ENCODE measurements at regions of chr2 and their contacts with region 1.

Region 1: DNA sequence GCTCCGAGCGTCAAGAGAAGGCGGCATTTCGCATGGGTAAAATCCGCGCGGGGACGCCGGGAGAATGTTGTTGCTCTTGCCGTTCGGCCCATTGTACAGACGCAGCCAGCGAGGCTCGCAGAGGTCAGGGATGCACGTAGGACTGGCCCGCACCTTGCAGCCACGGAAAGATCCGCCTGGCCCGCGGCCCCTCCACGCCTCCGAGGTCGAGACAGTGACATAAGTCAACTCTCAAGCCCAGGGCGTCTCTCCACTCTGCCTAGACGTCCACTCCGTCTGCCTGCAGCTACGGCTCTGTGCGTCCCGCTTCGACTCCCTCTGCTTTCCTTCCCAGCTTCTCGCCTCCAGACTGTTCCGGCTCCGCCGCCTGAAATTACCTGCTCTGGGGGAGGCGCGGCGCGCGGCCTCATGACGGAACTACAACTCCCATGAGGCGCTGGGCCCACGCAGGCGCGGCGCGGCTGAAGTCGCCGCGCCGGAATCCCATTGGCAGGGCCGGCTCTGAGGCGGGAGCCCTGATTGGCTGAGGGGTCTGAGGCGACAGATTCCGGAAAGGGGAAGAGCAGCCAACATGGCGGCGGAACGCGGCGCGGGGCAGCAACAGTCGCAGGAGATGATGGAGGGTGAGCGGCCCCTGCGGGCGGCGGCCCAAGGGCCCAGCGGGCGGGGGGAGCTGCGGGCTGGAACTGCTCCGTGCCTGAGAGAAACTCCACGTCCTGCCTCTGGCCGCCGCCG is at the start of gene PPP1R7:
- DNase-seq: peak; percentile 88 to 98 (median 94)
- ATAC-seq: peak; percentile 80
- H3K4me3 ChIP-seq: peak within 1 kb of the TSS; percentile 93
- H3K4me3 Mint-ChIP-seq: peak within 1 kb of the TSS; percentile 97
- H3K27ac ChIP-seq: peak within 1 kb of the TSS; percentile 53 to 65
- H3K27ac Mint-ChIP-seq: peak within 1 kb of the TSS; percentile 89
- H3K4me1 ChIP-seq: peaks cover 36% of the 10 kb centered on the region
- H3K4me1 Mint-ChIP-seq: peaks cover 43% of the 10 kb centered on the region
- H3K27me3 ChIP-seq: no peaks in the 10 kb centered on the region
- H3K27me3 Mint-ChIP-seq: no peaks in the 10 kb centered on the region
- CTCF ChIP-seq: peak; percentile 61
- total RNA-seq, gene PPP1R7: 36.4 to 38.2 TPM

Region 2: GRCh38 chr2:240851078-240851991 is 298.8 kb before region 1 on chr2:
- CTCF ChIA-PET with region 1: no interaction called
- POLR2A ChIA-PET with region 1: no interaction called
- intact Hi-C with region 1: loop called in 1 of 2 experiments (anchors 5 kb)
- DNase-seq: peak; percentile 72 to 90 (median 82)
- ATAC-seq: peak; percentile 97
- H3K4me3 ChIP-seq: no peak overlapping the region
- H3K4me3 Mint-ChIP-seq: no peak overlapping the region
- H3K27ac ChIP-seq: no peak overlapping the region
- H3K27ac Mint-ChIP-seq: no peak overlapping the region
- H3K4me1 ChIP-seq: no peaks in the 10 kb centered on the region
- H3K4me1 Mint-ChIP-seq: no peaks in the 10 kb centered on the region
- H3K27me3 ChIP-seq: no peaks in the 10 kb centered on the region
- H3K27me3 Mint-ChIP-seq: peaks cover 3% of the 10 kb centered on the region
- CTCF ChIP-seq: peak; percentile 88

Region 3: GRCh38 chr2:241009601-241010530 is 140.2 kb before region 1 on chr2:
- CTCF ChIA-PET with region 1: no interaction called
- POLR2A ChIA-PET with region 1: interaction called, 7 read pairs
- intact Hi-C with region 1: loop called in 1 of 2 experiments (anchors 10 kb)
- DNase-seq: peak; percentile 24 to 73 (median 57)
- ATAC-seq: peak; percentile 87
- H3K4me3 ChIP-seq: peak overlapping the region; percentile 34
- H3K4me3 Mint-ChIP-seq: peak overlapping the region; percentile 79
- H3K27ac ChIP-seq: peak overlapping the region; percentile 49 to 59
- H3K27ac Mint-ChIP-seq: peak overlapping the region; percentile 90
- H3K4me1 ChIP-seq: peaks cover 44% of the 10 kb centered on the region
- H3K4me1 Mint-ChIP-seq: peaks cover 39% of the 10 kb centered on the region
- H3K27me3 ChIP-seq: peaks cover 0 to 3% of the 10 kb centered on the region in 2 experiments
- H3K27me3 Mint-ChIP-seq: no peaks in the 10 kb centered on the region
- CTCF ChIP-seq: no peak

Region 4: GRCh38 chr2:241102239-241102803 is 47.8 kb before region 1 on chr2 and contains the start of gene MTERF4:
- CTCF ChIA-PET with region 1: no interaction called
- POLR2A ChIA-PET with region 1: interaction called, 73 read pairs
- intact Hi-C with region 1: loop called (anchors 1 to 2 kb)
- DNase-seq: peak; percentile 79 to 95 (median 88)
- ATAC-seq: peak; percentile 93
- H3K4me3 ChIP-seq: peak within 1 kb of the TSS; percentile 65
- H3K4me3 Mint-ChIP-seq: peak within 1 kb of the TSS; percentile 95
- H3K27ac ChIP-seq: peak within 1 kb of the TSS; percentile 84 to 90
- H3K27ac Mint-ChIP-seq: peak within 1 kb of the TSS; percentile 95
- H3K4me1 ChIP-seq: peaks cover 80% of the 10 kb centered on the region
- H3K4me1 Mint-ChIP-seq: peaks cover 73% of the 10 kb centered on the region
- H3K27me3 ChIP-seq: no peaks in the 10 kb centered on the region
- H3K27me3 Mint-ChIP-seq: no peaks in the 10 kb centered on the region
- CTCF ChIP-seq: no peak
- total RNA-seq, gene MTERF4: 84.0 to 87.5 TPM

Region 5: GRCh38 chr2:241355983-241356870 is 206.1 kb after region 1 on chr2 and contains the start of gene FARP2:
- CTCF ChIA-PET with region 1: no interaction called
- POLR2A ChIA-PET with region 1: no interaction called
- intact Hi-C with region 1: loop called in 1 of 2 experiments (anchors 2 kb)
- DNase-seq: peak; percentile 95 to 100 (median 97)
- ATAC-seq: peak; percentile 94
- H3K4me3 ChIP-seq: peak within 1 kb of the TSS; percentile 55
- H3K4me3 Mint-ChIP-seq: peak within 1 kb of the TSS; percentile 86
- H3K27ac ChIP-seq: peak within 1 kb of the TSS in 1 of 2 donors; percentile 20
- H3K27ac Mint-ChIP-seq: peak within 1 kb of the TSS; percentile 77
- H3K4me1 ChIP-seq: peaks cover 20% of the 10 kb centered on the region
- H3K4me1 Mint-ChIP-seq: peaks cover 28% of the 10 kb centered on the region
- H3K27me3 ChIP-seq: no peaks in the 10 kb centered on the region
- H3K27me3 Mint-ChIP-seq: no peaks in the 10 kb centered on the region
- CTCF ChIP-seq: no peak
- total RNA-seq, gene FARP2: 17.2 to 18.3 TPM